ENCODE measurements at regions of chr3 and their contacts with region 1.

Region 1: GRCh38 chr3:109718850-109719249 is 381.5 kb upstream of the DPPA4 start:
- DNase-seq: no peak
- ATAC-seq: no peak
- H3K4me3 ChIP-seq: no peak overlapping the region
- H3K27ac ChIP-seq: no peak overlapping the region
- H3K4me1 ChIP-seq: no peaks in the 10 kb centered on the region
- H3K27me3 ChIP-seq: peaks cover 18% of the 10 kb centered on the region
- CTCF ChIP-seq: no peak

Region 2: GRCh38 chr3:108713816-108714215 is 1005.0 kb before region 1 on chr3:
- CTCF ChIA-PET with region 1: no interaction called
- POLR2A ChIA-PET with region 1: no interaction called
- intact Hi-C with region 1: loop called (anchors 5 kb)
- DNase-seq: no peak
- ATAC-seq: no peak
- H3K4me3 ChIP-seq: no peak overlapping the region
- H3K27ac ChIP-seq: no peak overlapping the region
- H3K4me1 ChIP-seq: no peaks in the 10 kb centered on the region
- H3K27me3 ChIP-seq: peaks cover 90% of the 10 kb centered on the region
- CTCF ChIP-seq: no peak

Measured in PC-3 (cell line).